ENCODE measurements at regions of chr11 and their contacts with region 1.

Region 1: GRCh38 chr11:34492806-34493414 is 20.7 kb downstream of the ELF5 start:
- DNase-seq: peak; percentile 68
- ATAC-seq: no peak
- H3K4me3 ChIP-seq: no peak overlapping the region
- H3K27ac ChIP-seq: no peak overlapping the region
- H3K4me1 ChIP-seq: no peaks in the 10 kb centered on the region
- H3K27me3 ChIP-seq: no peaks in the 10 kb centered on the region
- CTCF ChIP-seq: peak; percentile 64

Region 2: GRCh38 chr11:34086554-34087283 is 406.2 kb before region 1 on chr11:
- intact Hi-C with region 1: no loop called
- DNase-seq: no peak
- ATAC-seq: no peak
- H3K4me3 ChIP-seq: no peak overlapping the region
- H3K27ac ChIP-seq: no peak overlapping the region
- H3K4me1 ChIP-seq: no peaks in the 10 kb centered on the region
- H3K27me3 ChIP-seq: no peaks in the 10 kb centered on the region
- CTCF ChIP-seq: no peak

Region 3: GRCh38 chr11:34366522-34366921 is 126.4 kb before region 1 on chr11:
- intact Hi-C with region 1: loop called (anchors 10 kb)
- DNase-seq: peak; percentile 54
- ATAC-seq: no peak
- H3K4me3 ChIP-seq: no peak overlapping the region
- H3K27ac ChIP-seq: no peak overlapping the region
- H3K4me1 ChIP-seq: peaks cover 6% of the 10 kb centered on the region
- H3K27me3 ChIP-seq: no peaks in the 10 kb centered on the region
- CTCF ChIP-seq: peak; percentile 29